MCF 10A (cell line): ENCODE measurements at regions of chr2 and their contacts with region 1.

Region 1: DNA sequence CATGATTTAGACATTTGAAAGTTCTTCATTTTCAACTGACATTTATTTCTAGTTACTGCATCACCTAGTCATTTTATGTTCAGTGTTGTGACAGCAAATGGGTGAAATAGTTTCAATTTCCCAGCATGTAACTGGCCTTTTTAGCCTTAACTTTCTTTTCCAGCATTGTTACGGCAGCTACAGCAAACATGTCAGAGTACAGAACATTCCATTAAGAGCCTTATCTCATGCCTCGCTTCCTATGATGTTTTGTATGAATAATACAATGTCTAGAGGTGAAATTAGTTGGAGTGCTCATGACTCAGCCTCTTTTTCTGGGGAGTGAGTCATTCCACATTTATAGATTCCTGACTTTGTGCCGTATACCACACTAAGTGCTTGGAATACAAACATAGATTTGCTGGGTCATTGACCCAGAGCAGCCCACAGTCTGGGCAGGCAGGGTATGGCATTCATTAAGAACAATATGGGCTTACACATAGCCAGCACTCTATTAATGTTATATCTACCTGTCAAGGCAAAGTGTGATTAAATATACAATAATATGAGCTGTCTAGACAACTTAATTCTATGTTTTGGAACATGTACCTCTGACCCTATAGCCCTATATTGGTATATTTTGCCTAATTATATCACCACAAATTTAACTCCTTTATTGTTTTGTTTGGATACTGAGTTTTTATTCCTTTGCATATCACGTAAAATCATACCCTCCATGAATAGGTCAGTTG is 72.2 kb downstream of the MAP2 start:
- DNase-seq: peak; percentile 92
- H3K4me3 Mint-ChIP-seq: no peak overlapping the region
- H3K27ac Mint-ChIP-seq: peak overlapping the region; percentile 83
- H3K4me1 Mint-ChIP-seq: peaks cover 9% of the 10 kb centered on the region
- H3K27me3 Mint-ChIP-seq: no peaks in the 10 kb centered on the region
- CTCF ChIP-seq: no peak

Region 2: GRCh38 chr2:209230560-209230959 is 265.5 kb before region 1 on chr2:
- CTCF ChIA-PET with region 1: no interaction called
- POLR2A ChIA-PET with region 1: no interaction called
- intact Hi-C with region 1: no loop called
- DNase-seq: no peak
- H3K4me3 Mint-ChIP-seq: no peak overlapping the region
- H3K27ac Mint-ChIP-seq: no peak overlapping the region
- H3K4me1 Mint-ChIP-seq: no peaks in the 10 kb centered on the region
- H3K27me3 Mint-ChIP-seq: no peaks in the 10 kb centered on the region
- CTCF ChIP-seq: no peak

Region 3: GRCh38 chr2:209305746-209306196 is 190.2 kb before region 1 on chr2:
- CTCF ChIA-PET with region 1: no interaction called
- POLR2A ChIA-PET with region 1: no interaction called
- intact Hi-C with region 1: no loop called
- DNase-seq: no peak
- H3K4me3 Mint-ChIP-seq: no peak overlapping the region
- H3K27ac Mint-ChIP-seq: no peak overlapping the region
- H3K4me1 Mint-ChIP-seq: no peaks in the 10 kb centered on the region
- H3K27me3 Mint-ChIP-seq: peaks cover 6% of the 10 kb centered on the region
- CTCF ChIP-seq: no peak

Region 4: DNA sequence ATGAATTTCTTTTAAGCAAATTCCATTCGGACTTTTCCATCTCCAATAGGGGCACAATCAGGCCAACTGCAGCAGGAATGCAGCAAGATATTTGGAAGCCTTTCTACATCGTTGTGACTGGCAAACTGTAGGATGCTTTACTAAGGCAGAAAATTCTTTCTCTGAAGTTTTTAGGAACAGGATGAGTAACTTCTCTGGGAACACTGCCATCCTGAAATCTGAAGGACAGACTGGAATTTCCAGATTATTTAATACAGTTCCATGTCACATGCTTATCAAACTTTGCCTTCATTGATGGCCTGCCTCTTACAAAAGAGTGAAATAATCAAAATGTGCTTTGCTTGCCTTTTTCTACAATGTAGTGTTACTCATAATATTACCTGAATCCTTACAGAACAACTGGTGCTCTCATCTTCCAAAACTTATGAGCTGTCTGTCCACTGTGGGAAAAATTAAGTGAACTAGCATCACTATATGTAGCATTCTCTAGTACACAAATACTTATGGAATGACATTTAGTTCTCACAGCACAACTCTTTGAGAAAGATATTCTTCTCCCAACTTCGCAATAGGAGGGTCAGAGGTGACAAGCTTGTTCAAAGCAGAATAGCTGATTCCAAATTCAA is 104.1 kb before region 1 on chr2:
- CTCF ChIA-PET with region 1: no interaction called
- POLR2A ChIA-PET with region 1: no interaction called
- intact Hi-C with region 1: loop called (anchors 5 kb)
- DNase-seq: peak; percentile 54
- H3K4me3 Mint-ChIP-seq: no peak overlapping the region
- H3K27ac Mint-ChIP-seq: peak overlapping the region; percentile 31
- H3K4me1 Mint-ChIP-seq: peaks cover 20% of the 10 kb centered on the region
- H3K27me3 Mint-ChIP-seq: no peaks in the 10 kb centered on the region
- CTCF ChIP-seq: no peak

Region 5: GRCh38 chr2:209565896-209566582 is 70.0 kb after region 1 on chr2:
- CTCF ChIA-PET with region 1: no interaction called
- POLR2A ChIA-PET with region 1: no interaction called
- intact Hi-C with region 1: no loop called
- DNase-seq: no peak
- H3K4me3 Mint-ChIP-seq: no peak overlapping the region
- H3K27ac Mint-ChIP-seq: no peak overlapping the region
- H3K4me1 Mint-ChIP-seq: no peaks in the 10 kb centered on the region
- H3K27me3 Mint-ChIP-seq: no peaks in the 10 kb centered on the region
- CTCF ChIP-seq: no peak